ENCODE measurements at regions of chr6 and their contacts with region 1.

Region 1: GRCh38 chr6:20319520-20320357 is 81.9 kb upstream of the E2F3 start:
- DNase-seq: peak; percentile 83
- ATAC-seq: peak; percentile 94
- H3K4me3 Mint-ChIP-seq: peak overlapping the region; percentile 90
- H3K27ac Mint-ChIP-seq: peak overlapping the region; percentile 99
- H3K4me1 Mint-ChIP-seq: peaks cover 17% of the 10 kb centered on the region
- H3K27me3 Mint-ChIP-seq: no peaks in the 10 kb centered on the region

Region 2: GRCh38 chr6:20202324-20202658 is 117.4 kb before region 1 on chr6:
- POLR2A ChIA-PET with region 1: no interaction called
- DNase-seq: no peak
- ATAC-seq: no peak
- H3K4me3 Mint-ChIP-seq: no peak overlapping the region
- H3K27ac Mint-ChIP-seq: no peak overlapping the region
- H3K4me1 Mint-ChIP-seq: peaks cover 38% of the 10 kb centered on the region
- H3K27me3 Mint-ChIP-seq: no peaks in the 10 kb centered on the region

Region 3: DNA sequence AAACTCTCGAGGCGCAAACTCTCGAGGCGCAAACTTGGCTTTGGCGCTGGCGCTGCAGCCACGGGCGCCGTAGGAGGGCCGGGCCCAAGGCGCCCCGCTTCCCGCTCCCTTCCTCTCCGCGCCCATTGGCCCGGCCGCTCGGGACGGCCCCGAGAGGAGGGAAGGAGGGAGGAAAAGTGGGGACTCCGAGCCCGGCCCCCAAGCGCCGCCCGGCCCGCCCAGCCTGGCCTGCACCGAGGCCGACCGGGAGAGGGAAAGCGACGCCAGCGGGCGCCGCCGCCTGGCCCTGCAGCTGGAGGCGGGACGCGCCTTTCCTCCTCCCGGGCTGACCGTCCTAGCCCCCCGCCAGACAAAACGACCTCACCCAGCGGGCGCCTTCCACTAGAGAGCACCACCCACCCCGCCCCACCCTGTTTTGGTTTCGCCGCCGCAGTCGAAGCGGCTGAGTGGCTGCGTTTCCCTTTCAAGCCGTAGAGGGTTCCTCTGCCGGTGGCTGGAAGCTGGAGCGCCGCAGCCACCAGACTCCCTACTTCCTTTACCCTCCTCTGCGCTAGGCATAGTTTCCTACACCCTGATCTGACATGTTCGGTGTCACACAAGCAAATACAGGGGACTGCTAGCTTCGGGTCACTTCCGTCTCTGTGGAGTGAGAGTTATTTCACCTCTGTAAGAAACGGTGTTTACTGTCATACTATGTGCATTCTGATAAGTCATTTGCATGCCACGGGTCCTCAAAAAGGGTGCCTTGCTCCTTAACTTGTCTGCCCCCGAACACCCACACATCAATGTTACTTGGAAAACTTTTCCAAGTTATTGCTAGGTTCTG is 107.1 kb before region 1 on chr6 and contains the start of gene MBOAT1:
- POLR2A ChIA-PET with region 1: interaction called, 16 read pairs
- DNase-seq: peak; percentile 83
- ATAC-seq: peak; percentile 91
- H3K4me3 Mint-ChIP-seq: peak within 1 kb of the TSS; percentile 95
- H3K27ac Mint-ChIP-seq: peak within 1 kb of the TSS; percentile 98
- H3K4me1 Mint-ChIP-seq: peaks cover 22% of the 10 kb centered on the region
- H3K27me3 Mint-ChIP-seq: peaks cover 15% of the 10 kb centered on the region
- total RNA-seq, gene MBOAT1: 14.1 to 14.8 TPM

Region 4: GRCh38 chr6:20334334-20334733 is 14.6 kb after region 1 on chr6:
- POLR2A ChIA-PET with region 1: interaction called, 59 read pairs
- DNase-seq: no peak
- ATAC-seq: no peak
- H3K4me3 Mint-ChIP-seq: no peak overlapping the region
- H3K27ac Mint-ChIP-seq: no peak overlapping the region
- H3K4me1 Mint-ChIP-seq: peaks cover 15% of the 10 kb centered on the region
- H3K27me3 Mint-ChIP-seq: peaks cover 4% of the 10 kb centered on the region

Region 5: GRCh38 chr6:20366091-20366832 is 46.5 kb after region 1 on chr6:
- POLR2A ChIA-PET with region 1: interaction called, 92 read pairs
- DNase-seq: peak; percentile 53
- ATAC-seq: peak; percentile 73
- H3K4me3 Mint-ChIP-seq: peak overlapping the region; percentile 81
- H3K27ac Mint-ChIP-seq: peak overlapping the region; percentile 97
- H3K4me1 Mint-ChIP-seq: peaks cover 46% of the 10 kb centered on the region
- H3K27me3 Mint-ChIP-seq: no peaks in the 10 kb centered on the region

Region 6: GRCh38 chr6:20377623-20378265 is 58.0 kb after region 1 on chr6:
- POLR2A ChIA-PET with region 1: interaction called, 10 read pairs
- DNase-seq: no peak
- ATAC-seq: no peak
- H3K4me3 Mint-ChIP-seq: no peak overlapping the region
- H3K27ac Mint-ChIP-seq: no peak overlapping the region
- H3K4me1 Mint-ChIP-seq: peaks cover 15% of the 10 kb centered on the region
- H3K27me3 Mint-ChIP-seq: no peaks in the 10 kb centered on the region

Region 7: DNA sequence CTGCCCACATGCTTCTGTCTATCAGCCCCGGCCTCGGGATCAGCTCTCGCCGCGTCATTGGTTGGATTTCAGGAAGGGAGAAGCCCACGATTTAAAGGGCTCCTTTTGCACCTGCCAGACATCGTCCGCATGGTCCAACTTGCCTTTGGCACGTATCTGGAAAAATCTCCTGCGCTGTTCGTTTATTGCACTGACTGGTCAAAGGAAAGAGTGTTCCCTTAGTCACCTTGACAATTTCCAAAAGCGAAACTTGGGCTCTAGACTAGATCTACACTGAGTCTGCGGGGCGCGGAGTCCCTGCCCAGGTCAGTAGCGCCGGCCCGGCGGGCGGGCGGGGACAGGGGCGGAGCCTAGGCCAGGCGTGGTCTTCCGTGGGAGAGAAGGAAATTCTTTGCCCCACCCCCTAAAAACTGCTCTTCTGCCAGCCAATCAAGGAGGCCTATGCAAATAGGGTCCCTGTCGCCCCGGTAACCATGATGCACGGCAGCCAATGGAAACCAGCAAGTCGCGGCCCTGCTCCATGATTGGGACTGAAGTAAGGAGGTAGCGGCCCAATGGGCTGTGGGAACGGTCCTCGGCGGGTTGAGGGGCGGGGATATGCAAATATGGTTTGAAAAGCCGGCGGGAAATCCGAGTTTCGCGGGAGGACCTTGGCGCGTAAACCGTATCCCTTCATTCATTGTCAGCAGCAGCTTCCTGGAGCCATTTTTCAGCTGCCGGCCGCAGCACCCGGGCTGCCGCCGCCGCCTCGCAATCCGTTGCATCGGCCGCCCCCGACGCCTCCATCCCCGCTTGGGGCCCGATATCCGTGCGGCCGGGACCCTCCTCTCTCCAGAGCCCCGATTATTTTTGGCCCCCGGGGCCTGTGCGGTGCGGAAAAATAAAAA is 81.7 kb after region 1 on chr6 and contains the start of gene E2F3:
- POLR2A ChIA-PET with region 1: interaction called, 220 read pairs
- DNase-seq: peak; percentile 94
- ATAC-seq: peak; percentile 86
- H3K4me3 Mint-ChIP-seq: peak within 1 kb of the TSS; percentile 95
- H3K27ac Mint-ChIP-seq: peak within 1 kb of the TSS; percentile 98
- H3K4me1 Mint-ChIP-seq: peaks cover 29% of the 10 kb centered on the region
- H3K27me3 Mint-ChIP-seq: no peaks in the 10 kb centered on the region
- total RNA-seq, gene E2F3: 26.8 to 28.0 TPM

Region 8: GRCh38 chr6:20427856-20428255 is 108.1 kb after region 1 on chr6:
- POLR2A ChIA-PET with region 1: no interaction called
- DNase-seq: no peak
- ATAC-seq: no peak
- H3K4me3 Mint-ChIP-seq: no peak overlapping the region
- H3K27ac Mint-ChIP-seq: no peak overlapping the region
- H3K4me1 Mint-ChIP-seq: peaks cover 17% of the 10 kb centered on the region
- H3K27me3 Mint-ChIP-seq: no peaks in the 10 kb centered on the region

Region 9: GRCh38 chr6:20534295-20535262 is 214.8 kb after region 1 on chr6 and contains the start of gene CDKAL1:
- POLR2A ChIA-PET with region 1: interaction called, 28 read pairs
- DNase-seq: peak; percentile 86
- ATAC-seq: peak; percentile 90
- H3K4me3 Mint-ChIP-seq: peak within 1 kb of the TSS; percentile 93
- H3K27ac Mint-ChIP-seq: peak within 1 kb of the TSS; percentile 95
- H3K4me1 Mint-ChIP-seq: peaks cover 34% of the 10 kb centered on the region
- H3K27me3 Mint-ChIP-seq: no peaks in the 10 kb centered on the region
- total RNA-seq, gene CDKAL1: 22.7 to 24.4 TPM